Ascending aorta (tissue), 2 donors: ENCODE measurements at regions of chr19 and their contacts with region 1.

Region 1: DNA sequence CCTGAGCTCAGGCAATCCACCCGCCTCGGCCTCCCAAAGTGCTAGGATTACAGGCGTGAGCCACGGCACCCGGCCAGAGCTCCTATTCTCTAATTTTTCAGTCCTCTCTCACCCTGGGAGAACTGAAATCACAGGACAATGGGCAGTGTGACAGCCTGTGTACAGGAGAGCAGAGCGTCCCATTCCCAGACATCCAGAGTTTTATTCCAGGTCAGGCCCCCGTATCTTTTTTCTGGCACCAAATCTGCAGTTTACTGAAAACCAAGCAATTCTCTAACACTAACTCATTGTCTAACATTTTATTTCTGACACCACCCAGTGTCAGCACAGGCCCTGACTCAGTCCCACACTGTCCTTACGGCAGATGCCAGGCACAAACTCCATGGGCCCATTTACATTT is 6.7 kb downstream of the ZNF708 start:
- DNase-seq: no peak
- H3K4me3 ChIP-seq: no peak overlapping the region
- H3K27ac ChIP-seq: no peak overlapping the region
- H3K4me1 ChIP-seq: peaks cover 0 to 3% of the 10 kb centered on the region in 2 donors
- H3K27me3 ChIP-seq: no peaks in the 10 kb centered on the region
- CTCF ChIP-seq: no peak

Region 2: DNA sequence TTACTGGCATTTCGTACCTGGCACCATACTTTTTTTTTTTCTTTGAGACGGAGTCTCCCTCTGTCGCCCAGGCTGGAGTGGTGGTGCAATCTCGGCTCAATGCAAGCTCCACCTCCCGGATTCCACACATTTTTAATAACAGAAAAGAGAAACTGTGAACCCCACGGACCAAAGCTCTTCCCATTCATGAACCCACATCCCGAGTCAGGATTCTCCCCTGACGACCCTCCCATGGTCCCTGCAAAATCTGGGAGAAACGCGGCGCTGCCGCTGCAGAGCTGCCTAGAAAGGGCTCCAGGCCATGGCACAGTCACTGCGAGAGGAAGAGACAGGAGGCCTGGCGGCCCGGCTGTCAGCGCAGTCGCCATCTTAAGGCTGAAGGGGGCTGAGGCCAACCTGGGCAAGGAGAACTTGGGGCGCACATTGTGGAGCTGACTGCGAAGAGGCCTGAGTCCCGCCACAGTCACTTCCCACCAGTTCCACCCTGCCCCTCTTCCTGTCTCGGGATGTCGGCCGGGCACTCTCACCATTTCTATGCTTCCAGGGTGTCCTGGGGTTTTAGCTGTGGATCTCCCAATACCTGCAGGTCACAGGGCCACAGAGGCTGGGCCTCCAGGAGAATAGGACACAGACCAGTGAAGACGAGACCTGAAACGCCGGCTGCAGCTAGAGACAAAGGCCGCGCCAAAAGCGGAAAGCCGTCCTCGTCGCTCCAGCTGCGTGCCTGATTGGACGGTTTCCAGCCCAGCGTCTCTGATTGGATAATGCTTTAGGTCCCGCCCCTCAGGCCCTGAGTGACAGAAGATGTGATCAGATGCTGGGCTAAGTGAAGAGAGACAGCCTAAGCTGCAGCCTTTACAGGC is 1084.5 kb before region 1 on chr19:
- intact Hi-C with region 1: loop called (anchors 5 kb)
- DNase-seq: peak; percentile 79 to 91
- H3K4me3 ChIP-seq: peak overlapping the region; percentile 56 to 73
- H3K27ac ChIP-seq: no peak overlapping the region
- H3K4me1 ChIP-seq: no peaks in the 10 kb centered on the region
- H3K27me3 ChIP-seq: no peaks in the 10 kb centered on the region
- CTCF ChIP-seq: peak in 1 of 3 experiments; percentile 18

Region 3: DNA sequence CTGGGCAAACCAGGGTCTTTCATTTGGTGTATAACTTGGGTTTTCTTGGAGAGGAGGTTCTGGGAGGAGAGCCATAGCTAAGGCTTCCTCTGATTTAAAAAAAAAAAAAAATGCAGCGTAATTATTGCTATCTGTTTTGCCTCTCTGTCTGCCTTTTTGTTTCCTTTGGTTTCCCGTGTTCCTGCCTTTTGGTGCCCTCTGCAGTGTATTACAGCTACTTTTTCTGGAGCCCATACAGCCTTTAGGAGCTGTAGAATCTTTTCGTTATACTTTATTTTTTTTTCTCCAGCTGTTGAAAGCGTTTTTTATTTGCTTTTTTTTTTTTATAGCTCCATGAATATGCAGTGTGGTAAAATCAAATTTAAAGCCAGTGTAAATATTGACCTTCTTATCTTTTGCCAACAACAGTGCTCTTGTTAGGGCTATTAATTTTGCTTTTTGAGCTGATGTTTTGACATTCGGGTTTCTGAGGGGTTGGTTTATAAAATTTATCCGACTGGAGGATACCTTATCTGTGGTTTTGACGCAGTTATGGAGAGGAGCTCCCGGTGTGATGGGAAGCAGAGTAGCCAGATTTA is 112.5 kb after region 1 on chr19:
- intact Hi-C with region 1: no loop called
- DNase-seq: no peak
- H3K4me3 ChIP-seq: peak overlapping the region in 1 of 2 donors; percentile 36
- H3K27ac ChIP-seq: peak overlapping the region; percentile 21 to 54
- H3K4me1 ChIP-seq: peaks cover 0 to 5% of the 10 kb centered on the region in 2 donors
- H3K27me3 ChIP-seq: no peaks in the 10 kb centered on the region
- CTCF ChIP-seq: peak in 1 of 3 experiments; percentile 31